PC-3 (cell line): ENCODE measurements at regions of chr5 and their contacts with region 1.

Region 1: GRCh38 chr5:121251954-121252353 is 599.7 kb upstream of the FTMT start:
- DNase-seq: peak; percentile 86
- ATAC-seq: peak; percentile 97
- H3K4me3 ChIP-seq: peak overlapping the region; percentile 37
- H3K27ac ChIP-seq: peak overlapping the region; percentile 91
- H3K4me1 ChIP-seq: peaks cover 17% of the 10 kb centered on the region
- H3K27me3 ChIP-seq: no peaks in the 10 kb centered on the region
- CTCF ChIP-seq: no peak

Region 2: GRCh38 chr5:121138495-121138907 is 113.5 kb before region 1 on chr5:
- CTCF ChIA-PET with region 1: no interaction called
- POLR2A ChIA-PET with region 1: no interaction called
- intact Hi-C with region 1: loop called (anchors 2 kb)
- DNase-seq: peak; percentile 60
- ATAC-seq: peak; percentile 74
- H3K4me3 ChIP-seq: no peak overlapping the region
- H3K27ac ChIP-seq: no peak overlapping the region
- H3K4me1 ChIP-seq: peaks cover 15% of the 10 kb centered on the region
- H3K27me3 ChIP-seq: no peaks in the 10 kb centered on the region
- CTCF ChIP-seq: no peak

Region 3: DNA sequence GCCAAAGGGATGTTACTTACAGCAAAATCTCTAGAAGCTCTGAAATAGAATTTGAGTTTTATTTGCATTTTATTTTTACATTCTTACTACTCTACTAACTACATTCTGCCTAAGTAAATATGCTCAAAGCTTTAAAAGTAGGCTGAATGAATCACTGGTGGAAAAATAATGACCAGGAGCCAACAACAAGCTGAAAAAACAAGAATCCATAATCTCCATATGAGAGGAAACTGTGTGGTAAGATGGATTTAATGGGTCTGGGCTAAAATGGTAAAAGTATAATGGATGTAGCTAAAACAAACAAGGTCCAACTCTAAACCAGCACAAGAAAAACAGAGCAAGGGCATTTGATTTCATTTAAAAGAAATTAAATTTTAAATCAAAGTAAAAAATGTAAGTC is 74.0 kb after region 1 on chr5:
- CTCF ChIA-PET with region 1: no interaction called
- POLR2A ChIA-PET with region 1: no interaction called
- intact Hi-C with region 1: loop called (anchors 2 kb)
- DNase-seq: peak; percentile 7
- ATAC-seq: peak; percentile 75
- H3K4me3 ChIP-seq: no peak overlapping the region
- H3K27ac ChIP-seq: 0 out of 2 replicates have a peak overlapping the region, but pooled peaks have one; percentile 11
- H3K4me1 ChIP-seq: peaks cover 4% of the 10 kb centered on the region; the same call in 1 of the 2 replicates
- H3K27me3 ChIP-seq: no peaks in the 10 kb centered on the region
- CTCF ChIP-seq: no peak